A673 (cell line): ENCODE measurements at regions of chr6 and their contacts with region 1.

Region 1: DNA sequence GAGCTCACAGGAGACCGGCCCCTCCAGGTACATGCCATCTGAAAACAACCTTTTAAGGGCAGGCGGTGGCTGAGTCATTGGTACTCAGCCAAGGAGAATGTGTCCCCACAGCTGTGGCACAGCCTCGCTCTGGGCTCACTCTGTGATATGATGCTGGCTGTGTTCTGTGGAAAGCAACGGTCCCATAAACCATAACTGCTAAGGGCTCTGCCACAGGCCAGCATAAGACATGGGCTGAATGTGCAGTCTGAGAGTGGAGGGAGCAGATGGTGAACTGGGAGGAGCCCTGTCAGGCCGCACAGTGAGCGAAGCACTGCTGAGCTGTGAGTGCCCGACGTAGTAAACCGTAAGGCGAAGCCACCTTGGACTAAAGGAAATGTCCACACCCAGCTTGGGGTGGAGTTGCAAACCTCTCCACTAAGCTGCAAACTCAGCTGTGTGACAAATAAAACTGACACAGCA is 375.8 kb downstream of the THBS2 start:
- DNase-seq: no peak
- H3K4me3 ChIP-seq: no peak overlapping the region
- H3K27ac ChIP-seq: no peak overlapping the region
- H3K4me1 ChIP-seq: no peaks in the 10 kb centered on the region
- H3K27me3 ChIP-seq: no peaks in the 10 kb centered on the region
- CTCF ChIP-seq: no peak

Region 2: GRCh38 chr6:166956444-166957086 is 1921.3 kb before region 1 on chr6 and contains the start of gene RNASET2:
- CTCF ChIA-PET with region 1: no interaction called
- POLR2A ChIA-PET with region 1: interaction called, 11 read pairs
- intact Hi-C with region 1: no loop called
- DNase-seq: peak; percentile 93
- H3K4me3 ChIP-seq: peak within 1 kb of the TSS; percentile 79
- H3K27ac ChIP-seq: peak within 1 kb of the TSS; percentile 49
- H3K4me1 ChIP-seq: peaks cover 26% of the 10 kb centered on the region
- H3K27me3 ChIP-seq: no peaks in the 10 kb centered on the region
- CTCF ChIP-seq: no peak
- total RNA-seq, gene RNASET2: 5.7 and 11.9 TPM in 2 replicates